ENCODE measurements at regions of chr18 and their contacts with region 1.

Region 1: DNA sequence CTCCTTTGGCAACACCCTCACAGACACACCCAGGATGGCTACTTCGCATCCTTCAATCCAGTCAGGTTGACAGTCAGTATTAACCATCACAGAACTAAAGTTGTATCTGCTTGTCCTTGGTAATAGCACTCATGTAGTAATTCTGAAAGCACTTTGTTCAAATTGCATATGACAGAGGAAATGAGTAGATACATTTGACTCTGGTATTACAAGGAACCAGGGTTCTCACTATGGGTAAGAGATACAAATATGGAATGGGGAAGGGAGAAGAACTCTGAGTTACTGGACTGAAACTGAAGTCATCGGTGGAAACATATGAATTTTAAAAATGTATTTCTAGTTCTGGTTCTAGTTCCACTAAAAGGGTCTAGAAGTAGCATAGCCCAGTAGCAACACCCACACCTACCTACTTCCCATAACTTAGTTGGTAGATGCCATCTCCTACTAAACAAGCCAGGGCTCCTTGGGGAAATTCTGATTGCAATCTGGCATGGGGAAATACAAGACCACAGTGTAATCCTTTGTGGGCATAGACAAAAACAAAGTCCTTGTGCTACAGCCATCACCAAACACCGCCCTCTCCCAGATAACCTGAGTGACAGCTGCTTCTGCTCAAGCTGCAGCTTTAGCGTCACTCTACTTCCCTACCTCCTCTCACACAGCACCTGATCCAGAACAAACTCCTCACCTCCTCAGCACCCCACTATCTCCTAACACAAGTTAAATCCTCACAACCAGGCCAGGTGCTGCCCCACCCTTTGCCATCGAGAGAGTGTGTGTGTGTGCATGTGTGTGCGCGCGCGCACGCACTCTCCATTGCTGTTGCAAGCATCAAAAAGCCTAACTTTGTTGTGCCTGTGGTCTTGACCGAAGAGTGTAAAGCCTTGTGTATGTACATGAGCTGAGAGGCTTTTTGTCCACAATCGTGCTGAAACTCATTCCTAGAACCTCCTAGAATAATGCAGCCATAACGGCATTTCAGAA is 31.4 kb upstream of the CD226 start:
- DNase-seq: peak; percentile 17
- ATAC-seq: peak; percentile 86
- H3K4me3 Mint-ChIP-seq: no peak overlapping the region
- H3K27ac Mint-ChIP-seq: peak overlapping the region; percentile 48
- H3K4me1 Mint-ChIP-seq: peaks cover 46% of the 10 kb centered on the region
- H3K27me3 Mint-ChIP-seq: no peaks in the 10 kb centered on the region

Region 2: GRCh38 chr18:69469444-69469919 is 509.5 kb before region 1 on chr18:
- CTCF ChIA-PET with region 1: no interaction called
- POLR2A ChIA-PET with region 1: no interaction called
- intact Hi-C with region 1: loop called in 1 of 2 experiments (anchors 10 kb)
- DNase-seq: peak; percentile 76
- ATAC-seq: peak; percentile 94
- H3K4me3 Mint-ChIP-seq: no peak overlapping the region
- H3K27ac Mint-ChIP-seq: peak overlapping the region; percentile 67
- H3K4me1 Mint-ChIP-seq: peaks cover 2% of the 10 kb centered on the region
- H3K27me3 Mint-ChIP-seq: peaks cover 4% of the 10 kb centered on the region

Region 3: DNA sequence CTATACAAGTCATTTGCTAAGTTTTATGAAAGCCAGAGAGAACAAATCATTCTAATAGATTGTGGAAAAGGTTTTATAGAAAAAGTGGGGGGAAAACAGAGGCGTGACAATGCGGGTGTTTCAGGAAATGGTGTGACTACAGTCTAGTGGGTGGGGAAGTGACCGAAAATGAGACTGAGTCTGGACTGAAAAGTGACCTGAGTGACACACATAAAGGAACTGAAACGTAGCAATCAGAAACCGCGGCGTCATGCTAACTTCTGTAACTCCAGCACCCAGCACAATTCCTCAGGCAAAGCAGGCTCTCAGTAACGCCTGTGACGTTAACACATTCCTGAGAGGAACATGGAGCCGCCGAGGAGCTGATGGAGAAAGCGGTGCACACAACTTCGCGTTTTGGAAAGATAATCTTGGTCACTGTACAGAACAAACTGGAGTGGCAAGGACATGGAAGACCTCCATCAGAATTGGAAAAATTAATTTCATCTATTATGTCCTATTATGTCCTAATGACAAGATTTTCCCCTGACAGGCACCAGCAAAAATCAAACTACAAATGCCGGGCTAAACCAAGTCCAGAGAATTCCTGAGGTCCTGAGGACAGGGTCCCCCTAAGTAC is 30.0 kb before region 1 on chr18:
- CTCF ChIA-PET with region 1: no interaction called
- POLR2A ChIA-PET with region 1: interaction called, 4 read pairs
- intact Hi-C with region 1: loop called (anchors 2 to 5 kb)
- DNase-seq: peak; percentile 82
- ATAC-seq: peak; percentile 57
- H3K4me3 Mint-ChIP-seq: no peak overlapping the region
- H3K27ac Mint-ChIP-seq: no peak overlapping the region
- H3K4me1 Mint-ChIP-seq: peaks cover 50% of the 10 kb centered on the region
- H3K27me3 Mint-ChIP-seq: no peaks in the 10 kb centered on the region